AG04450 (cell line): ENCODE measurements at regions of chr5 and their contacts with region 1.

Region 1: DNA sequence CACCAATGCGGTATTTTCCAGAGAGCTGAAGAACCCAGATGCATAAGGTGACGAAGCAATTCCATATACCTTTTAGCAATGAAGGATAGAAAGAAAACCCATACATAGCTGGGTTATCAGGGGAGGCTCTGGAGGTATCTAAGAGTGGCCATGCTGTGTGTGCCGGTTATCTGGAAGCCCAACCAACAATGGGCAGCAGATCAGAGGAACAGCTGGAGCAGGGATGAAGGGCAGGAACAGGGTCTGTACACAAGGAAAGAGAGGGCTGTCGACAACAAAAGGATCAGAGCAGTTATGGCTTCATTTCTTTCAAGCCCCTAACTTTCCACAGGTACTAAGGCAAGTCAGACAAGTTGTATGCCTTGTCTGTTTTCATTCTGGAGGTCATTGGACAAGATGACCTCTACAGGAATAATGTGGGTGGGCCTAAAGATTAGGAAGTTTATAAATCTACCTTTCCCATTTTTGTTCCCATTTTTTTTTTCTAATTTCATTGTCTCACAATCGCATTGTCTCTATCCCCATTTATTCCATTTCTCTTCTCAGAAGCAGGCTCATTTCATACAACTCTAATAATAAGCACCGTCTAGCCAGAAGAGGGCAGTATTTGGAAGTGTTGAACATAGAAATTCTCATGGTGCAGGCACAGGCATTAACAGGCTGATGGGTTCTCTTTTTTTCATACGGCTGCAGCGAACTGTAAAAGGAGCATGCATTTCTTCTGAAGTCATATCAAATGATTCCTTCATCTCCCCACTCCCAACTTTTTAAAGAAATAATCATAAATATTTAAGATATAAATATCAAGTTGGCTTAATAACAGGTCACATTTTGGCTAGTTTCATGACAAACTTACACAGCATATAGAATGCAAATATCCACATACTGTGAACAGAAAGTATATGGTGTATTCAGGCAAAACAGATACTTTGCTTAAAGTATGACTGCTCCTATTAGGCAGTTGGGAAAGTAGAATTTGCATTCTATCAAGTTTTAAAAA is 63.5 kb downstream of the ZNF474 start:
- DNase-seq: peak; percentile 41
- H3K4me3 ChIP-seq: no peak overlapping the region
- H3K27ac ChIP-seq: no peak overlapping the region
- H3K27me3 ChIP-seq: no peaks in the 10 kb centered on the region
- CTCF ChIP-seq: peak; percentile 58

Region 2: DNA sequence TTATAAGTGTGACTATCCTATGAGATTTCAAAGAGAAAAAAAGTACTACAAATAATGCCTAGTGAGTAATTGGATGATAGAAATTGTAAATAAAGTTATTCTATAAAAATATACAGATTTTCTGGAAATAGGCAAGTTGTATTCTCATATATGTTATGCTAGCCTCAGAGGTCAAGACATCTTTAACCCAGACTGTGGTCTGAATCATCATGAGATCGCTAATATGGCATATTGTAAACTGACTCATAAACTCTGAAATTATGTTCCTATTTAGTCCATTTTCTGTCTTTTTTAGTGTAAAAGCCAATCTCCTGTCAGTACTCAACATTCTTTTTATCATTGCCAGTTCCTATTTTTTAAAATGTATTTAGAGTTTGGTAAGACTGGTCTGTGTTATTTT is 129.0 kb before region 1 on chr5:
- CTCF ChIA-PET with region 1: no interaction called
- POLR2A ChIA-PET with region 1: no interaction called
- DNase-seq: no peak
- H3K4me3 ChIP-seq: no peak overlapping the region
- H3K27ac ChIP-seq: no peak overlapping the region
- H3K27me3 ChIP-seq: no peaks in the 10 kb centered on the region
- CTCF ChIP-seq: no peak

Region 3: GRCh38 chr5:122120957-122121356 is 71.8 kb before region 1 on chr5:
- CTCF ChIA-PET with region 1: no interaction called
- POLR2A ChIA-PET with region 1: no interaction called
- DNase-seq: no peak
- H3K4me3 ChIP-seq: no peak overlapping the region
- H3K27ac ChIP-seq: no peak overlapping the region
- H3K27me3 ChIP-seq: no peaks in the 10 kb centered on the region
- CTCF ChIP-seq: no peak

Region 4: DNA sequence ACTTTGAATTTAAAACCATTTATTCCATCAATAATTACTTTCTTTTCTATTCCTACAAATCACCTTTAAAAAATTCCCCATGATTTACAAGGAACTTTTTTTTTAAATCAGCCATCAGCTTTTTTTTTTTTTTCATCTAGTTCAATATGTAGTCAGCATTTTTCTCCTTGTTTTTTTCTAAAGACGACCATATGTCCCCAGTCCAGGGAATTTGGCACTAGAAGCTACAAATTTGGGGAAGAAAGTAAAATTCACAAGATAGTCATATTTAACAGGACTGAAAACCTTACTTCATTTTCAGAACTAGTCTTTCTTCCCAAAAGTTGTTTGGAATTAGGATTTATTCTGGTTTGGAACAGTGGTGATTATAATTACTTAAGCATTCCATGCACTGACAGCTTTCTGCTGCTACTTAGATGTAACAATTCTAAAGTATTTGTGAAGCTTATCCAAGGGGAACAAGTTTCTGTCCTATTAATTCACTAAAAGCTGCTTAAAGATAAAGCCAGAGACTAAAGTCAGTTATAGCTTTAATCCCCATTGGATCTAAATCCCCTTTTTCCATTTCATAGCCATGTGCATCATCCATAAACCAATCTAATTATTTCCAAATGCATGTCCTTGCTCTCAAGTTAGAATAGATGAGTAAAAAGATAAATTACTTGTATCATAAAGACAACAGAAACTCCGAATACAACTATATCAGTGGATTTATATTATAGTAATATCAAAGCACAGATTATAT is 111.8 kb after region 1 on chr5:
- CTCF ChIA-PET with region 1: interaction called, 10 read pairs
- POLR2A ChIA-PET with region 1: no interaction called
- DNase-seq: no peak
- H3K4me3 ChIP-seq: no peak overlapping the region
- H3K27ac ChIP-seq: no peak overlapping the region
- H3K27me3 ChIP-seq: no peaks in the 10 kb centered on the region
- CTCF ChIP-seq: no peak

Region 5: GRCh38 chr5:122362361-122362760 is 169.6 kb after region 1 on chr5:
- CTCF ChIA-PET with region 1: interaction called, 11 read pairs
- POLR2A ChIA-PET with region 1: no interaction called
- DNase-seq: no peak
- H3K4me3 ChIP-seq: no peak overlapping the region
- H3K27ac ChIP-seq: no peak overlapping the region
- H3K27me3 ChIP-seq: no peaks in the 10 kb centered on the region
- CTCF ChIP-seq: no peak

Region 6: DNA sequence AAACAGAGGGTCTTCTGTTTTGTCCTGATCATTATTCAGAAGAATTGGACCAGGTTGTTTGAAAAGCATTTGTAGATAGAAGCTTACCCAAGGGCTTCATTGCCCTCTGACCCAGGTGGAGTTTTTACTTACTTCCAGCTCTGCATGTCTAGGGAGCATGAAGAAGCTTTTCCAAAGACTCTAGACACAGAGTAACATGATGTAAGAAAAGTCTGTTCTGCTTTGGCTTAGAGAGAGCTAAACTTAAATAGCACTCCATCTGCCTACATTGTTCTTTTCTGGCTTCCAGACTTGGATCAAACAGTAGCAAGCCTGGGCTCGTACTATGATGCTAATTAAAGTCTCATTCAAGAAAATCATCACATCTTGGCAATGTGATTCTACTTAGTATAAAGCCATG is 231.3 kb after region 1 on chr5:
- CTCF ChIA-PET with region 1: interaction called, 22 read pairs
- POLR2A ChIA-PET with region 1: no interaction called
- DNase-seq: no peak
- H3K4me3 ChIP-seq: no peak overlapping the region
- H3K27ac ChIP-seq: no peak overlapping the region
- H3K27me3 ChIP-seq: no peaks in the 10 kb centered on the region
- CTCF ChIP-seq: no peak

Region 7: DNA sequence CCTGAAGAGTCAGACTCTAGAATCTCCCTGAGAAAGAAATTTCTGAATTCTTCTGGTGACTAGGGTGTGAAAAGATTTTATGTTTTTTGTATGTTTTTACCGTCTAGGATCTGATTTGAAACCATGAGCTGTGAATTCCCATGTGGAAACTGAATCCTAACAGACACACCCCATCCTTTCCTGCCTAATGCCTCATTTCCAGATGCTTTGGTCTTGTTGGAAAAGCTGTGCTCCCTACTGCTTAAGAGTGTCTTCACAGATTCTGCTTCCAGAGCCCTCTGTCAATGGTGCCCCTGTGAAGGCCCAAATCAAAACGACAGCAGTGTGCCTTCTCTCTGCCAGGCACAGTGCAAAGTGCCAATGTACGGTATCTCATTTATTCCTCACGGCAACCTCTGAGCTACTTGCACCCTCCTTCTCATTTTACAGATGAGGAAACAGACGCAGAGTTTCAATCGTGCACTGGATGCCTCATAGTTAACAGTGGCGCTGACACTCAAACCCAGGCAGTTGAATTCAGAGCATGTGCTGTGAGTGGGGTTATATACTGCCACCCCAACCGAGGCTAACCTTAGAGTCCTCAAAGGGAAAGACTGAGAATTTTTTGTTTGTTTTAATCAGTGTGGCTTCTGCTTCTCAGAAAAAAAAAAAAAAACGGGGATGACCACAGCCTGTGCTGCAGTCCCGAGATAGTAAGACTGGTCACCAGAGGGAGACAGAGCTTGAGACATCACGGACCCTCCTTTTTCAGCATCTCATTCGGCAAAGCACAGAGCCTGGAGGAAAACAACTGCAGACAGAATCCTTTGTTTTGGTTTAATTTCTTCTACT is 307.7 kb after region 1 on chr5:
- CTCF ChIA-PET with region 1: interaction called, 61 read pairs
- POLR2A ChIA-PET with region 1: no interaction called
- DNase-seq: peak; percentile 24
- H3K4me3 ChIP-seq: no peak overlapping the region
- H3K27ac ChIP-seq: no peak overlapping the region
- H3K27me3 ChIP-seq: peaks cover 4% of the 10 kb centered on the region
- CTCF ChIP-seq: peak; percentile 70